ENCODE measurements at regions of chr9 and their contacts with region 1.

Region 1: DNA sequence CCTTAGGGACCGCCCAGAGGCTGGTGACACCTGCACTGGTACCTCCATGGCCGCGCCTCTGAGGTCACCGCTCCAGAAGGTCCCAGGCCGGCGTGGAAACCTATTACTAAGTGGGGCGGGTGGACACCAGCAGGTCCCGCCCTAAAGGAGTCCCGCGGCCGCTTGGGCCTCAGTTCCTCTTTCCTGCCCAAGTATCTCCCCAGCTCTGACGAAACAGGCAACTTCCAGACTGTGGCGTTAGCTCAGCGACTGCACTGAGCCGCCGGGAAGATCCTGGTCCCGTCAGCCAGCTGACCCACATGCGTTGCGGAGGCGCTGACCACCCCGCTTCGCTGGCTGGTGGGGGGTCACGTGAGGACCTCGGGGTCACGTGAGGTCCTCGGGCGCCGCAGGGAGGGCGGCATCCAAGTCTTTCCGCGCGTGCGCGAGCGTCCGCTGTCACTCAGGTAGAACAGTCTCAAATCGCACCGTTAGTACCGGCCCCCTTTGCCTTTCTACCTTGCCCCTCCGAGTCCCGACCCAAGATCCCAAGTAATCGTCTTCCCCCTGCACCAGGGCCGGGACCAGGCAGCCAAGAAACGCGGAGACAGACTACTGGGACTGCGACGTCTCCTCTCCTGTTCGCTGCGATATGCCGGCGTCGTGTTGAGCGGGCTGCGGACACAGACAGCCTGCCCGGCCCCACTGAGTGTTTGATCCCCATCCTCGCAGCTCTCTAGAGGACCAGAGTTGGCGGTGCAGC is 53.7 kb upstream of the KDM4C start:
- DNase-seq: peak; percentile 89
- ATAC-seq: peak; percentile 92
- H3K4me3 Mint-ChIP-seq: peak overlapping the region; percentile 94
- H3K27ac Mint-ChIP-seq: peak overlapping the region; percentile 93
- H3K4me1 Mint-ChIP-seq: peaks cover 13% of the 10 kb centered on the region
- H3K27me3 Mint-ChIP-seq: no peaks in the 10 kb centered on the region

Region 2: GRCh38 chr9:6667633-6668280 is 36.3 kb before region 1 on chr9:
- POLR2A ChIA-PET with region 1: no interaction called
- DNase-seq: no peak
- ATAC-seq: no peak
- H3K4me3 Mint-ChIP-seq: no peak overlapping the region
- H3K27ac Mint-ChIP-seq: no peak overlapping the region
- H3K4me1 Mint-ChIP-seq: peaks cover 1% of the 10 kb centered on the region
- H3K27me3 Mint-ChIP-seq: no peaks in the 10 kb centered on the region

Region 3: DNA sequence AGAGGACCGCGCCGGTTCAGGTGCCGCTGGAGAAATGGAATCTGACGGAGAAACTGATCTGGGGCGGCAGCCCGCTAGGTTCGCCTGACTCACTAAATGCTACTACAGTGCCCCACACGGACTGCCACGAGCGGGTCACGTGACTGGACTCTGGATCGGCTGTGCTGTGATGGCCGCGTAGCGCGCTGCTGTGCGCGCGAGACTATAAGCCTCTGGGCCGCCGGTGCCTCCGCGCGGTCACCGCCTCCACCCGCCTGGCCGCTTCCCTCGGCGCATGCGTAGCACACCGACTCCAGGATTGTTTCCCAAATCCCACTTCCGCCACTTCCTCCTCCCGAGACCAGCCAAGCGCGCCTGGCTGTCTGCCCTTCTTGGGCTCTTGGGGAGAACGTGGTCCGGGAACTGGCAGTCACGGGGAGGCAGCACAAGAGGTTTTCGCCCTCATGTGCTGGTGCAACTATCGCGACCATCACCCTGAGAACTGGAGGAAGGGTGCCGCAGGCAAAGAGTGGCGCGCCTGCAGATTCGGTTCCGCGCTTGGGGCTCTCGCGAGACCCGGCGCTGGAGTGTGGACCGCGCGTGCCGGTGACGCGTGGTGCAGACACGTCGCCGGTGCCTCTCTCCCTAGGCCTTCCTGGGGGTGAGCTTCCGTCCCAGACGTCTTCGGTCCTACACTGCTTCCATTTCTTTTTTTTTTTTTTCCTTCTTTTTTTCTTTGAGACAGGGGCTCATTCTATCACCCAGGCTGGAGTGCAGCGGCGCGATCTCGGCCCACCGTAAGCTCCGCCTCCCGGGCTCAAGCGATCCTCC is 22.7 kb before region 1 on chr9:
- POLR2A ChIA-PET with region 1: interaction called, 28 read pairs
- DNase-seq: peak; percentile 90
- ATAC-seq: peak; percentile 92
- H3K4me3 Mint-ChIP-seq: peak overlapping the region; percentile 91
- H3K27ac Mint-ChIP-seq: peak overlapping the region; percentile 99
- H3K4me1 Mint-ChIP-seq: peaks cover 17% of the 10 kb centered on the region
- H3K27me3 Mint-ChIP-seq: no peaks in the 10 kb centered on the region

Region 4: GRCh38 chr9:6715755-6716643 is 11.9 kb after region 1 on chr9:
- POLR2A ChIA-PET with region 1: interaction called, 24 read pairs
- DNase-seq: peak; percentile 83
- ATAC-seq: peak; percentile 93
- H3K4me3 Mint-ChIP-seq: peak overlapping the region; percentile 85
- H3K27ac Mint-ChIP-seq: peak overlapping the region; percentile 92
- H3K4me1 Mint-ChIP-seq: peaks cover 6% of the 10 kb centered on the region
- H3K27me3 Mint-ChIP-seq: no peaks in the 10 kb centered on the region

Region 5: GRCh38 chr9:6873857-6874256 is 169.8 kb after region 1 on chr9:
- POLR2A ChIA-PET with region 1: no interaction called
- DNase-seq: no peak
- ATAC-seq: no peak
- H3K4me3 Mint-ChIP-seq: no peak overlapping the region
- H3K27ac Mint-ChIP-seq: no peak overlapping the region
- H3K4me1 Mint-ChIP-seq: peaks cover 39% of the 10 kb centered on the region
- H3K27me3 Mint-ChIP-seq: no peaks in the 10 kb centered on the region